ENCODE measurements at regions of chr12 and their contacts with region 1.

Region 1: GRCh38 chr12:12334367-12335040 is 15.5 kb downstream of the MANSC1 start:
- DNase-seq: peak; percentile 19
- ATAC-seq: peak; percentile 90
- H3K4me3 ChIP-seq: no peak overlapping the region
- H3K27ac ChIP-seq: no peak overlapping the region
- H3K4me1 ChIP-seq: 0 out of 2 replicates have a peak, but pooled peaks cover 3% of the 10 kb centered on the region
- H3K27me3 ChIP-seq: no peaks in the 10 kb centered on the region
- CTCF ChIP-seq: peak; percentile 81 to 89 (median 82)
- EP300 ChIP-seq: no peak
- POLR2A ChIP-seq: no peak
- RAD21 ChIP-seq: peak; percentile 58

Region 2: GRCh38 chr12:12081836-12082497 is 252.5 kb before region 1 on chr12:
- CTCF ChIA-PET with region 1: interaction called, 214 read pairs
- POLR2A ChIA-PET with region 1: no interaction called
- RAD21 ChIA-PET with region 1: interaction called, 58 read pairs
- SMC1A ChIA-PET with region 1: interaction called, 112 read pairs
- in situ Hi-C with region 1: loop called (anchors 5 kb)
- intact Hi-C with region 1: loop called (anchors 1 kb)
- DNase-seq: peak; percentile 39
- ATAC-seq: peak; percentile 96
- H3K4me3 ChIP-seq: no peak overlapping the region
- H3K27ac ChIP-seq: no peak overlapping the region
- H3K4me1 ChIP-seq: no peaks in the 10 kb centered on the region
- H3K27me3 ChIP-seq: no peaks in the 10 kb centered on the region
- CTCF ChIP-seq: peak; percentile 33 to 54 (median 34); a peak in 4 of 6 replicates
- EP300 ChIP-seq: no peak
- POLR2A ChIP-seq: no peak
- RAD21 ChIP-seq: peak; percentile 80

Region 3: GRCh38 chr12:12319451-12320183 is 14.9 kb before region 1 on chr12:
- CTCF ChIA-PET with region 1: interaction called, 14 read pairs
- POLR2A ChIA-PET with region 1: no interaction called
- RAD21 ChIA-PET with region 1: no interaction called
- SMC1A ChIA-PET with region 1: interaction called, 5 read pairs
- in situ Hi-C with region 1: no loop called
- intact Hi-C with region 1: no loop called
- DNase-seq: no peak
- ATAC-seq: no peak
- H3K4me3 ChIP-seq: no peak overlapping the region
- H3K27ac ChIP-seq: no peak overlapping the region
- H3K4me1 ChIP-seq: no peaks in the 10 kb centered on the region
- H3K27me3 ChIP-seq: no peaks in the 10 kb centered on the region
- CTCF ChIP-seq: no peak
- EP300 ChIP-seq: no peak
- POLR2A ChIP-seq: no peak
- RAD21 ChIP-seq: no peak

Region 4: GRCh38 chr12:12349711-12350665 is 15.5 kb after region 1 on chr12 and contains the start of gene MANSC1:
- CTCF ChIA-PET with region 1: interaction called, 18 read pairs
- POLR2A ChIA-PET with region 1: interaction called, 3 read pairs
- RAD21 ChIA-PET with region 1: no interaction called
- SMC1A ChIA-PET with region 1: interaction called, 4 read pairs
- in situ Hi-C with region 1: no loop called
- intact Hi-C with region 1: no loop called
- DNase-seq: no peak
- ATAC-seq: peak; percentile 88
- H3K4me3 ChIP-seq: peak within 1 kb of the TSS; percentile 55
- H3K27ac ChIP-seq: no peak within 1 kb of the TSS
- H3K4me1 ChIP-seq: peaks cover 10% of the 10 kb centered on the region
- H3K27me3 ChIP-seq: peaks cover 0 to 3% of the 10 kb centered on the region in 2 experiments; a peak in 2 of 4 replicates
- CTCF ChIP-seq: peak in 2 of 3 experiments; percentile 34 to 49; a peak in 3 of 6 replicates
- EP300 ChIP-seq: no peak
- POLR2A ChIP-seq: peak; percentile 35; the same call in 1 of the 2 replicates
- RAD21 ChIP-seq: no peak
- polyA plus RNA-seq, gene MANSC1: 0.02 to 0.06 TPM

Region 5: GRCh38 chr12:12534166-12534866 is 199.8 kb after region 1 on chr12:
- CTCF ChIA-PET with region 1: no interaction called
- POLR2A ChIA-PET with region 1: no interaction called
- RAD21 ChIA-PET with region 1: no interaction called
- SMC1A ChIA-PET with region 1: no interaction called
- in situ Hi-C with region 1: no loop called
- intact Hi-C with region 1: no loop called
- DNase-seq: no peak
- ATAC-seq: no peak
- H3K4me3 ChIP-seq: no peak overlapping the region
- H3K27ac ChIP-seq: no peak overlapping the region
- H3K4me1 ChIP-seq: no peaks in the 10 kb centered on the region
- H3K27me3 ChIP-seq: no peaks in the 10 kb centered on the region
- CTCF ChIP-seq: no peak
- EP300 ChIP-seq: no peak
- POLR2A ChIP-seq: no peak
- RAD21 ChIP-seq: no peak

Measured in GM12878 (cell line).